ENCODE measurements at regions of chr6 and their contacts with region 1.

Region 1: GRCh38 chr6:52337633-52338290 is 24.2 kb upstream of the PAQR8 start:
- DNase-seq: no peak
- H3K4me3 Mint-ChIP-seq: no peak overlapping the region
- H3K27ac Mint-ChIP-seq: no peak overlapping the region
- H3K4me1 Mint-ChIP-seq: peaks cover 55% of the 10 kb centered on the region
- H3K27me3 Mint-ChIP-seq: no peaks in the 10 kb centered on the region

Region 2: GRCh38 chr6:52352239-52353008 is 14.7 kb after region 1 on chr6:
- CTCF ChIA-PET with region 1: interaction called, 11 read pairs
- POLR2A ChIA-PET with region 1: no interaction called
- DNase-seq: no peak
- H3K4me3 Mint-ChIP-seq: no peak overlapping the region
- H3K27ac Mint-ChIP-seq: no peak overlapping the region
- H3K4me1 Mint-ChIP-seq: peaks cover 17% of the 10 kb centered on the region
- H3K27me3 Mint-ChIP-seq: peaks cover 8% of the 10 kb centered on the region

Region 3: GRCh38 chr6:52361945-52362442 is 24.2 kb after region 1 on chr6 and contains the start of gene PAQR8:
- CTCF ChIA-PET with region 1: interaction called, 10 read pairs
- POLR2A ChIA-PET with region 1: no interaction called
- DNase-seq: peak; percentile 75
- H3K4me3 Mint-ChIP-seq: peak within 1 kb of the TSS; percentile 99
- H3K27ac Mint-ChIP-seq: peak within 1 kb of the TSS; percentile 95
- H3K4me1 Mint-ChIP-seq: peaks cover 40% of the 10 kb centered on the region
- H3K27me3 Mint-ChIP-seq: no peaks in the 10 kb centered on the region
- total RNA-seq, gene PAQR8: 21.2 to 22.8 TPM